ENCODE measurements at regions of chr9 and their contacts with region 1.

Region 1: DNA sequence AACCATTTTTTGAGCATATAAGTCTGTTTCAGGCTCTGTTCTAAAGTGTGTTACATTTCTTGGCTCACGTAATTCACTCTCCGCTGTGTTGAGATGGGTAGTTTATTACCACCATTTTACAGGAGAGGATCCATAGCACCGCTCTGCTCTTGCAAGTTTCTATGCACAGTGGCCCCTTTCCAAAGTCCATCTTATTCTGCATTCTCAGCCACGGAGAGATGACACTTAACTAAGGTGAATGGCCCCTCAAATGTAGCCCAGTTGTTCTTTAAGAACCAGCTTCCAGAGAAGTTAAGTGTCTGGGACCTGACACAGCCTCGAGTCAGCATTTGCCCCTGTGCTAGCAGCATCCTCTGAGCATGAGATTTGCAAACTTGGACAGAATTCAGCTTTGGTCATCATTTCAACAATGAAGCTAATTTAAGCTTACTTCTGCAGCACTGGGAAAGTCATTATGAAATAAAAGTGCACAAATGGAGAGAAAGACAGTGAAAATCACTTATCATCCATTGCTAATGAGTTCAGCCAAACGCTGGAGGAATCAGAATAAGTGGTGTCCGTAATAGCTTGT is 61.9 kb downstream of the FAM78A start:
- DNase-seq: no peak
- H3K4me3 ChIP-seq: peak overlapping the region in 1 of 3 experiments; percentile 11
- H3K27ac ChIP-seq: peak overlapping the region; percentile 65
- H3K4me1 ChIP-seq: peaks cover 38% of the 10 kb centered on the region
- H3K27me3 ChIP-seq: no peaks in the 10 kb centered on the region
- CTCF ChIP-seq: no peak
- POLR2A ChIP-seq: peak; percentile 21

Region 2: DNA sequence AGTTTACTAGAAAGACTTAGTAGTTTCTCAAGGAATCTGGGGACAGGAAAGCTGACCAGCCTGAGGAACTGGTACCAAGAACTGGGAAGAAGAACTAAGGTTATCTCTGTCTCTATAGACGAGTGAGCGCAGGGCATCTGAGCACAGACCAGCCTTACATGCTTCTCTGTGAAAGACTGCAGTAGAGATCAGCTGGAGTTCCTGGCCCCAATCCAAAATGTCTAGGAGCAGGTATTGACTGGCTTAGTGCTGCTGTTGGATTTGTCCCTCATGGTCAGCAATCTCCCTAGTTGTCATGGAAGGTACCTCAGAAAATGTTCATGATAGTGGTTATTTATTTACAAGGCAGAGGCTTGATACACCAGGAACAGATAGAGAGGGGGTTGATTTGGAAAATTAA is 75.7 kb before region 1 on chr9:
- CTCF ChIA-PET with region 1: no interaction called
- POLR2A ChIA-PET with region 1: no interaction called
- dilution Hi-C with region 1: no loop called
- intact Hi-C with region 1: no loop called
- DNase-seq: no peak
- H3K4me3 ChIP-seq: no peak overlapping the region
- H3K27ac ChIP-seq: no peak overlapping the region
- H3K4me1 ChIP-seq: no peaks in the 10 kb centered on the region
- H3K27me3 ChIP-seq: no peaks in the 10 kb centered on the region
- CTCF ChIP-seq: no peak
- POLR2A ChIP-seq: no peak

Region 3: DNA sequence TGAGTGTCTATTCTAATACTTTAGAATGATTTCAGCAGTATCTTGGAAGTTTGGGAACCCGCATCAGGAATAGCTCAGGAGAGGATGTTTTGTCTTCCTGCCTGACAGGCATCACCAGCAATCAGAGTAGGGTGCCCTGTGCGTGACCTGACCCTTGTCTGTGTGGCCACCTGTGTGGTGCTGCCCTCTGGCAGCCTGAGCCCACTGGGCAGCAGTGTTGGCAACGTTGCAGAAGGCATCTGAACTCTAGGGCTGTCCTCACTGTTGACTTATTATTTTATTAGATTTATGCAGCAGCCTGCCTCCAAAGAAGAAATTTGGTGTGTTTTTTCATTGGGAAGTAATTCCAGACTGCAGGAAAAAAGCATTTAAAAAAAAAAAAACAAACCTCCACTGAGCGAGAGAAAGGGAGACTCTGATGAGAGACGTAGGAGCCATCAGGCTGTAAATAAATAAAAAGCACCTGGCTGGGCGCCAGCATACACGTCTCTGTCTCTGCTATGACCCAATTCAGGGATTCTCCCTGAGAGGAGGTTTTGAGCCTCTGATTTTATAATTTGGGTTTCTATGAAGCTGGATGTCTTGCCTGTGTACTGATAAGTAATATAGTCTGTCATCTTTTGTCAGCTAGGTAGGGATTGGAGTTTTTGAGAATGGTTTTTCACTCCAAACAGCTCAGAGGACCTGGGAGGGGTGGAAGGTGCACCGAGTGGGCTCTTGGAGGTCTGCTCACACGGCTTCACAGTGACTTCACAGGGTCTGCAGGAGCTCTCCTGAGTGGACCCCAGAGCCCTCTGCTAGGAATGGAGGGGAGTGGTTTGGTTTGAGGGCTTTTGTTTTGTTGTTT is 13.0 kb after region 1 on chr9:
- CTCF ChIA-PET with region 1: interaction called, 10 read pairs
- POLR2A ChIA-PET with region 1: no interaction called
- dilution Hi-C with region 1: no loop called
- intact Hi-C with region 1: loop called (anchors 1 kb)
- DNase-seq: peak; percentile 65
- H3K4me3 ChIP-seq: no peak overlapping the region
- H3K27ac ChIP-seq: no peak overlapping the region
- H3K4me1 ChIP-seq: peaks cover 39% of the 10 kb centered on the region
- H3K27me3 ChIP-seq: no peaks in the 10 kb centered on the region
- CTCF ChIP-seq: no peak
- POLR2A ChIP-seq: no peak

Region 4: DNA sequence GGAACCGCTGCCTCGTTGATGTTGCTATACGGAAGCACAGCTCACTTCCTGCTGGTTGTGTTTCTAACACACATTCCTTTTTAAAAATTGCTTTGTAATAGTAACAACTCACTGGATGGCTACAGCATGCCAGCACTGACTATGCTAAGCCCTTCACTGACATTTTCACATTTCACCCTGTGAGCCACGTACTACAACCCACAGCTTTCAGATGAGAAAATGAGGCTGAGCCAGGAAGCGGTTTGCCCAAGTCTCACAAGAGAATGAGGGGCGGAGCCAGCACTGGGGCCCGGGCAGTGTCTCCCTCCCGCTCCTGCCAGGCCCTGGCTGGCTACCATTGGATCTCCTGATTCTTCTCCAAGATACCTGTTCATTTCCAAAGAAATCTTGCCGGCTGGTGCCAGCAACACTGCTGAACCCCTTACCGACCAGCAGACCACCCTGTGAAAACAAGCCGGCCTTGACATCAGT is 23.6 kb after region 1 on chr9:
- CTCF ChIA-PET with region 1: interaction called, 13 read pairs
- POLR2A ChIA-PET with region 1: interaction called, 7 read pairs
- dilution Hi-C with region 1: no loop called
- intact Hi-C with region 1: loop called (anchors 1 kb)
- DNase-seq: peak; percentile 94
- H3K4me3 ChIP-seq: no peak overlapping the region
- H3K27ac ChIP-seq: peak overlapping the region; percentile 97
- H3K4me1 ChIP-seq: peaks cover 32% of the 10 kb centered on the region
- H3K27me3 ChIP-seq: no peaks in the 10 kb centered on the region
- CTCF ChIP-seq: no peak
- POLR2A ChIP-seq: peak; percentile 72

Region 5: GRCh38 chr9:131255676-131256197 is 41.4 kb after region 1 on chr9:
- CTCF ChIA-PET with region 1: interaction called, 4 read pairs
- POLR2A ChIA-PET with region 1: interaction called, 3 read pairs
- dilution Hi-C with region 1: no loop called
- intact Hi-C with region 1: loop called (anchors 5 kb)
- DNase-seq: no peak
- H3K4me3 ChIP-seq: no peak overlapping the region
- H3K27ac ChIP-seq: no peak overlapping the region
- H3K4me1 ChIP-seq: peaks cover 7% of the 10 kb centered on the region
- H3K27me3 ChIP-seq: no peaks in the 10 kb centered on the region
- CTCF ChIP-seq: no peak
- POLR2A ChIP-seq: no peak

Region 6: GRCh38 chr9:131270171-131271015 is 56.0 kb after region 1 on chr9:
- CTCF ChIA-PET with region 1: interaction called, 15 read pairs
- POLR2A ChIA-PET with region 1: interaction called, 4 read pairs
- dilution Hi-C with region 1: no loop called
- intact Hi-C with region 1: loop called (anchors 1 kb)
- DNase-seq: peak; percentile 73
- H3K4me3 ChIP-seq: no peak overlapping the region
- H3K27ac ChIP-seq: peak overlapping the region; percentile 67
- H3K4me1 ChIP-seq: peaks cover 54% of the 10 kb centered on the region
- H3K27me3 ChIP-seq: no peaks in the 10 kb centered on the region
- CTCF ChIP-seq: no peak
- POLR2A ChIP-seq: no peak

Region 7: DNA sequence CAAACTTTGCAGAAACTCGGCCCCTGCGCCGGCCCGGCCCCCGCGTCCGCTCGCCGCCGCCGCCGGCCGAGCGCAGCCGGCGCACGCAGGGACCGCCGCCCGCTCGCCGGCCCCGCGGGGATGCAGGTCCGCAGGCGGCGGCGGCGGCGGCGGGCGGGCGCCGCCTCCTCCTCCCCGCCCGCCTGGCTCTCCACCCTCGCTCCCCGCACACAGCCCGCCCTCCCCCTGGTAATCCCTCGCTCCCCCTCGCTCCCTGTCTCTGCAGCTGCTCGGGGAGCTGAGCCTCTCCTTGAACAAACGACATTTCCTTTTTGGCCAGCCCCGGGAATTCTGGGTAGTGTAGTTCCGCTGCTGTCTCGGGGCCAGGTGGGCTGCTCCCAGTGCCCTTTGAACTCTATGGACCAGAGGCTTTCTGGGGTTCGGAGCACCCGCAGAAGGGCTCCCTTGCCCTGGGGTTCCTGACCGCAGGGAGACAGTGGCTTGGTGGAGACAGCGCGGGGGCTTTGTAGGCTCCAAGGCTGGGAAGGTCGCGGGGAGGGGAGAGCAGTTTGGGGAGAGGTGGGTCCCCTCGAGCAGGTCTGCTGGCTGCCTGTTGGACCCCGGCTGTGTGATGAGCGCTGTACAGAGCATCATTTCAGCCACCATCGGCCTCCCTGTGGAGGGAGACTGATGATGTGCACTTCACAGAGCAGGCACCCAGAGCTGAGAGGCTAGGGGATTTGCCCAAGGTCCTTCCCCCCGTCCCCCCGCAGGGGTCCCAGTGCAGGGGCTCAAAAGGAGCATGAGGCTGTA is 63.7 kb after region 1 on chr9:
- CTCF ChIA-PET with region 1: interaction called, 15 read pairs
- POLR2A ChIA-PET with region 1: no interaction called
- dilution Hi-C with region 1: no loop called
- intact Hi-C with region 1: loop called (anchors 1 kb)
- DNase-seq: peak; percentile 86
- H3K4me3 ChIP-seq: peak overlapping the region in 2 of 3 experiments; percentile 31 to 81
- H3K27ac ChIP-seq: no peak overlapping the region
- H3K4me1 ChIP-seq: peaks cover 30% of the 10 kb centered on the region
- H3K27me3 ChIP-seq: peaks cover 14 to 18% of the 10 kb centered on the region in 2 experiments
- CTCF ChIP-seq: no peak
- POLR2A ChIP-seq: no peak

Measured in endothelial cell of umbilical vein (primary cell).